ENCODE measurements at regions of chrX and their contacts with region 1.

Region 1: DNA sequence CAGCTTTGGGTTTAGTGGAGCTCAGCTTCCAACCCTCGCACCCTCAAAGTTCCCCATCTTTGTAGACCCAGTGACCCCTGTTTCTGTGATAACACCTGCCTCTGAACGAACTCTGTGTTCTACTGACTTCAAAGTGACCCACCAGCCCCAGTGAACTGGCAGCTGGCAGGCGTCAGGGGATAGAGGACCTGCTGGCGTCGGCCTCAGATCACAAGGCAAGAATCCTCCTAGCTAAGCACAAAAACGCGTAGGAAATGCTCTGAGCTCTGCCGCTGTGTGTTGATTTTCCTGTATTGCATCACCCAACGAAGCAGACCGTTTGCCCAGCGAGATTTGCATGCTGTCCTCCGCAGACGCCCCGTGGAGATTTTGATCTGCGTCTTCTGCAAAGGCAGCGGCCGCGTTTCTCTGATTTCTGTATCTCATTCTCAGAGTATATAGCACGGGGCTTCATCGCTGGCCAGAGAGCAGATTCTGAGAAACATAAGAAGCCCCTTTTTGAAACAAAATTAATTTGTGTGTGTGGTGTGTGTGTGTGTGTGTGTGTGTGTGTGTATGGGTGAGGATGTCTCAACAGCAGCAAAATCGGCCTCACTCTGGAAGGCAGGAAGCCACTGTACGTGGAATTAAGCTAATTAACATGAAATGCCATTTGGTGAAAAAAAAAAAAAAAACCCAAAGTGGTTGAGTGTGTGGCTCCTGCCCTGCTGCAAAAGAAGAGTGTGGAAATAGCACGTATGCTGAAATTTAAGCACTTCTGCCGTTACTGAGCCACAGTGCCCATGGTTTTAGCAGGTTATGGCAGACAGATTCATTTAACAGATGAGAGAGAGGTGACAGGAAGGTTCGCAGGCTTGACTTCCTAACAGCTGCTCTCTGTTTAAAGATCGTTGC is 29.2 kb upstream of the ASMTL start:
- DNase-seq: peak; percentile 87
- ATAC-seq: peak; percentile 73
- H3K4me3 Mint-ChIP-seq: peak overlapping the region; percentile 82
- H3K27ac Mint-ChIP-seq: peak overlapping the region; percentile 99
- H3K4me1 Mint-ChIP-seq: peaks cover 65% of the 10 kb centered on the region
- H3K27me3 Mint-ChIP-seq: no peaks in the 10 kb centered on the region

Region 2: GRCh38 chrX:883588-883987 is 598.3 kb before region 1 on chrX:
- CTCF ChIA-PET with region 1: no interaction called
- POLR2A ChIA-PET with region 1: no interaction called
- intact Hi-C with region 1: no loop called
- DNase-seq: no peak
- ATAC-seq: no peak
- H3K4me3 Mint-ChIP-seq: no peak overlapping the region
- H3K27ac Mint-ChIP-seq: no peak overlapping the region
- H3K4me1 Mint-ChIP-seq: no peaks in the 10 kb centered on the region
- H3K27me3 Mint-ChIP-seq: peaks cover 13% of the 10 kb centered on the region

Region 3: DNA sequence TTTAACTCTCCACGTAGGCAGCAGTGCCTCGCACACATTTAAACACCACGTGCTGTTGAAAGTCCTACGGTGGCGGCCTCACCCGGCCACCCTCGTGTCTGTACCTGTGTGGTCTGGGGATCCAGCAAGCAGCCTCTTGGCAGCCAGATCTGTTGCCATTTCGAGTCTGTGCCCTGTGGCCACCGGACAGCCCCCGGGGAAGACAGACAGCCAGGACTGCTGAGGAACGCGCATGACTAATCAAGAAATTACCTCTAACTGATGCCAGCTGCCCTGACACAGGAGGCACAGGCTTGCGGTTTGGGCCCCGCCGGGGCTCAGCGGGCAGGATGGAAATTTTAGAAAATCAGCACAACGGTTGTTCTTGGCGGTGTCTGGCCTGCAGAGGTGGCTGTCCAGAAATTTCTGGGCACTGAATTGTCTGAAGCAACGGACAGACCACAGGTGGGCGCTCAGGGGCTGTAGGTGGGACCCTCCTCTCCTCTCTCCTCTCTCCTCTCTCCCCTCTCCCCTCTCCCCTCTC is 13.6 kb before region 1 on chrX:
- CTCF ChIA-PET with region 1: no interaction called
- POLR2A ChIA-PET with region 1: no interaction called
- intact Hi-C with region 1: loop called (anchors 1 kb)
- DNase-seq: peak; percentile 91
- ATAC-seq: peak; percentile 75
- H3K4me3 Mint-ChIP-seq: peak overlapping the region; percentile 54
- H3K27ac Mint-ChIP-seq: peak overlapping the region; percentile 84
- H3K4me1 Mint-ChIP-seq: peaks cover 87% of the 10 kb centered on the region
- H3K27me3 Mint-ChIP-seq: no peaks in the 10 kb centered on the region

Region 4: DNA sequence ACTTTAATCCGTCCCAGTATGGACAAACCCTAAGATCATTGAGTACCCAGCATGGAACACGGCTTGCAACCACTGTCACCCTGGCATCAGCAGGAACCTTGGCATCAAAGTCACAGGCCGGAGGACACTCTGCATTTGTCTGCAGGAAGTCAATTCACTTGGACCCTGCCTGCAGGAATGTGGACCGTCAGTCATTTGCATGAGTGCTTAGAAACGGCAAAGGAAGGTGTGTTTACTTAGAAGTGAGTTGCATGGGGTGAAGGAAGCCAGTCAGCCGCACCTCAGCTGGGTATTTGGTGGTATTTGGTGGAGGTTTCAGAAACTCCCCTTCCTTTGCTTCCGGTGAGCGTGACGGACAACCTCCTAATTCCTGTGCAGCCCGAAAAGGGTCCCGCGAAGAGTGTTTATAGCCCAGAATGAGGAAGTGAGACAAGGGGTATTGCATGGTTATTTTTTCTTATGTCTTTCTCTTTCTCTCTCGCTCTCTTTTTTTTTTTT is 39.6 kb after region 1 on chrX:
- CTCF ChIA-PET with region 1: no interaction called
- POLR2A ChIA-PET with region 1: no interaction called
- intact Hi-C with region 1: loop called (anchors 5 kb)
- DNase-seq: peak; percentile 79
- ATAC-seq: peak; percentile 72
- H3K4me3 Mint-ChIP-seq: peak overlapping the region; percentile 60
- H3K27ac Mint-ChIP-seq: peak overlapping the region; percentile 77
- H3K4me1 Mint-ChIP-seq: peaks cover 52% of the 10 kb centered on the region
- H3K27me3 Mint-ChIP-seq: no peaks in the 10 kb centered on the region

Region 5: GRCh38 chrX:1528186-1528883 is 46.5 kb after region 1 on chrX:
- CTCF ChIA-PET with region 1: no interaction called
- POLR2A ChIA-PET with region 1: no interaction called
- intact Hi-C with region 1: loop called (anchors 5 kb)
- DNase-seq: peak; percentile 40
- ATAC-seq: peak; percentile 72
- H3K4me3 Mint-ChIP-seq: no peak overlapping the region
- H3K27ac Mint-ChIP-seq: no peak overlapping the region
- H3K4me1 Mint-ChIP-seq: peaks cover 8% of the 10 kb centered on the region
- H3K27me3 Mint-ChIP-seq: no peaks in the 10 kb centered on the region

Region 6: GRCh38 chrX:1542994-1543725 is 61.3 kb after region 1 on chrX:
- CTCF ChIA-PET with region 1: no interaction called
- POLR2A ChIA-PET with region 1: no interaction called
- intact Hi-C with region 1: no loop called
- DNase-seq: no peak
- ATAC-seq: no peak
- H3K4me3 Mint-ChIP-seq: no peak overlapping the region
- H3K27ac Mint-ChIP-seq: no peak overlapping the region
- H3K4me1 Mint-ChIP-seq: peaks cover 7% of the 10 kb centered on the region
- H3K27me3 Mint-ChIP-seq: no peaks in the 10 kb centered on the region